Right ventricle myocardium superior (tissue), 1 donor: ENCODE measurements at regions of chr6 and their contacts with region 1.

Region 1: DNA sequence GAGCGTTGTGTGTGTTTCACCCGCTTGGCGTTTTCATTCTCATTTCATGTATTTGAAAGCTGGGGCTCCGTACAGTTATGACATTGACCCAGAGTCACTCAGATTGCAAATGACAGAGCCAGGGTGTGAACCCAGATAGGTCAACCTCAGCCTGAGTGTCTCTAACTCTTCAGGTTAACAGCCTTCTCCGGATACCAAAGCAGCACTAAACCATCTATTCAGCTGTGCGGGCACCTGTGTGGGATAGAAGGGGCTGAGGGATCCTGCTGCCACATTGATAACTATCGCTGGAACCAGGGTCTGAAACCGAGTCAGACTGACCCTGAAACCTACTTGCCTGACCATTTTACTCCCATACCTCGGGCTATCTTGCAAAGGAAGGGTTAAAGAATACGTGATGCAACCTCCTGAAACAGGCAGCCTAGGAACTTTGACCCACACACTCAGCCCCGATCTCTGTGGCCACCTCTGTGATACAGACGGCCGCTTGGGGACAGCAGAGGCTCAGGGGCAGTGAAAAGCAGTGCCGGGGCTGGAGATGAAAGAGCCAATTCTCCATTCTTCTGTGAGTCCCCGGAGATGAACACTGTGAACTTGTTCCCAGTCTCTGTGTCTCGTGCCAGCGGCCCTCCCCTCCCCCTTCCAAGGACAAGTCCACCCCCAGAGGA is 233.5 kb upstream of the QKI start:
- DNase-seq: peak; percentile 88
- ATAC-seq: peak; percentile 96

Region 2: DNA sequence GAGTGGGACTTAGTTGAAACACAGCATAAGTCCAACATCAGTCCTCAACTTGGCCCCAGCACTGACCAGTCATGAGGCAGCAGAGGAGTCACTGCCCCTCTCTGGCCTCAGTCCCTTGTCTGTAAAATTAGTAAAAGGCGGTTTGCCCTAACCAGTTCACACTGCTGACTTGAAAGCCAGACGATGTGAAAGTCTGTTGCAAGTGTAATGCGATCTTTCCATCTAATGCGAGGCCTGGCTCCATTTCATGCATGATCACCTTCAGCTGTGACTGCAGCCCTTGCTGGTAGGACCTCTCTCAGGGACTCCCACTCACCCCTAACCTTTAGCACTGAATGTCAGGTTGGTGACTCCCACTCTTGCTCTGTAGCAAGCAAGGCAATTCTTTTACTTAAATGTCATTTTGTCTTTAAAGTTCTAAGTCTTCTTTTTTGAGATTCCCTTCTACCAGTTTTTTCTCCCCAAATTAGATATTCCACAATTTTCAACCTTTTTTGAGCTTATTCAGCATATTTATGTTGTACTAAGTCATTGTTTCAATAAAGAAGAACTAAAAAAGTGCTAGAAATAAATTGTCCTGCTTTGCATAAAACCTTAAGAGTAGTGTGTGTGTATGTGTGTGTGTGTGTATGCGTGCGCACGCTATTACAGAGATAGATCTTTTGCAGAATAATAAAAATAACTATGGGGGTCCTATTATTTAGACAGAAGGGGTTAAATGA is 207.7 kb before region 1 on chr6:
- intact Hi-C with region 1: no loop called
- DNase-seq: no peak
- ATAC-seq: no peak

Region 3: GRCh38 chr6:163063561-163063960 is 117.4 kb before region 1 on chr6:
- intact Hi-C with region 1: no loop called
- DNase-seq: no peak
- ATAC-seq: no peak

Region 4: GRCh38 chr6:163243083-163243482 is 62.1 kb after region 1 on chr6:
- intact Hi-C with region 1: no loop called
- DNase-seq: peak; percentile 56
- ATAC-seq: peak; percentile 85

Region 5: GRCh38 chr6:163419413-163420288 is 238.6 kb after region 1 on chr6:
- intact Hi-C with region 1: loop called (anchors 5 kb)
- DNase-seq: no peak
- ATAC-seq: no peak

Region 6: GRCh38 chr6:163565140-163565539 is 384.1 kb after region 1 on chr6:
- intact Hi-C with region 1: loop called (anchors 10 kb)
- DNase-seq: no peak
- ATAC-seq: peak; percentile 31

Region 7: DNA sequence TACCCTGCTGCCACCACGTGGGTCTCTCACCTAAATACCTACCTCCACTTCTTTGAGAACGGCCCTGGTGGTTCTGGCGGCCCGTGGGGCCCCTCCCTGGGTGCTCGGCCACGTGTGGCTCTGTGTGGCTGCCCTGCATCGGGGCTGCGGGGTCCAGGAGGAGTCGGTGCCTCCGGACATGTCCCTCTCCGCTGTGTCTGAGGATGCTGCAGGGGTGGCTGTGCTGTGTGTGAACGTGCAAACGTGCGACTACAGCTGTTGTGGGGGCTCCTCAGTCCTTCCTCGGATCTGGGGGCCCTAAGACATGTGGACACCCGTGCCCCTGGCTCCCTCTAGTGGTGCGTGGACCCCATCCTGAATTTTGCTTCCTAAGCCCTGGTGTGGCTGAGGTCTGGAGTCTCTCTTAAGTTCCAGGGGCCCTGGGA is 925.3 kb after region 1 on chr6:
- intact Hi-C with region 1: loop called (anchors 5 kb)
- DNase-seq: peak; percentile 81
- ATAC-seq: peak; percentile 60